Breast epithelium (tissue), 4 donors: ENCODE measurements at regions of chr14 and their contacts with region 1.

Region 1: DNA sequence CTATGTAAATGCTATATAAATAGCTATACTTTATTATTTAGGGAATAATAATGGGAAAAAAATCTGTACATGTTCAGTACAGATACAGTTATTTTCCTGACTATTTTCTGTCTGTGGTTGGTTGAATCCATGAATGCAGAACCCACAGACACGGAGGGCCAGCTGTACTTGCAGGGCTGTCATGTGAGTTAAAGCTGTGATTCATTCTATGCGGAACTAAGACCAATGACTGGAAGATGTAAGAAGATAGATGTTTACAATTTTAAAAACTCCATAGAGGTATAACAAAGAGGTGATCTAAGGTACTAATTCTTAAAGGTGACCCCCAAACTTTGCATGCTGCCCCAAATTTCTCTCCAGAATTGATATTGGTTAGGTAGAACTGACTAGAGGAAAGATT is 14.6 kb downstream of the PCNX4 start:
- DNase-seq: no peak
- H3K4me3 ChIP-seq: no peak overlapping the region
- H3K27ac ChIP-seq: no peak overlapping the region
- H3K4me1 ChIP-seq: no peaks in the 10 kb centered on the region
- H3K27me3 ChIP-seq: no peaks in the 10 kb centered on the region
- CTCF ChIP-seq: no peak
- POLR2A ChIP-seq: no peak

Region 2: DNA sequence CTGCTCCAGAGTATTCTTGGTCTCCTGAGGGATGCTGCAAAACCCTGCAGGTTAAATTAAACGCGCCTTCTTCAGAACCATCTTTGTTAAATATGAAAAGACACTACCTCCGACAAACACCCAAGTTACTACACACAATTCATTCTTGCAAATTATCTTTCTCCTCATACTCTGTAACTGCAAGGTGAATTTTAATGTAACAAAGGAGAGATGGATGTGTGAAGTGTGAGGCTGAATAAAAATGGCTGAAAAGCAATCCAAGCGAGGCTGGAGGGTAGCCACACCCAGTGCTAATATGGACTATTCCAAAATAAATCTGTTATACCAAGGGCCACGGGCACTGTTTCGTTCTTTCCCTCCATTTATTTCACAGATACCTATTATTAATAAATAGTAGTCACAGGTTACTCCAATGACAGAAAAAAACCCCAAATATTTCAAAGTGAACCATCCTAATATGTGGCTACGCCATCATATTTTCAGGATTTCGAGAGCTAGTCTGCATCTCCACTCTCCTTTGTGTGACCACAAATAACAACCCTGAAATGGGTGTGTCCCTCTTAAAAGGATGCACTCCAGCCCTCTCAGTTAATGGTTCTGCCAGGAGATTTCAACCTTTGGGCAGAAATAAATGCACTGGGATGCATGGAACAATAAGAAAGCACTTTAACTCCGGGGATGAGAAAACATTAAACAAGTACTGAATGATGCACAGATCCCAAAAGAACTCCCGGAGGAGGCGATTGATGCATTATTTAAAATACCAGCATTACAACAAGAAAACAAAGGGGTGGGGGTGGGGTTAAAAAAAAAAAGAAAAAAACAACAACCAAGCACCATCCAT is 476.7 kb before region 1 on chr14:
- intact Hi-C with region 1: loop called (anchors 10 kb)
- DNase-seq: no peak
- H3K4me3 ChIP-seq: no peak overlapping the region
- H3K27ac ChIP-seq: no peak overlapping the region
- H3K4me1 ChIP-seq: no peaks in the 10 kb centered on the region
- H3K27me3 ChIP-seq: peaks cover 0 to 9% of the 10 kb centered on the region in 2 donors
- CTCF ChIP-seq: no peak
- POLR2A ChIP-seq: no peak